MCF 10A (cell line): ENCODE measurements at regions of chr20 and their contacts with region 1.

Region 1: GRCh38 chr20:44217342-44218092 is 6.9 kb upstream of the OSER1 start:
- DNase-seq: peak; percentile 81
- H3K4me3 Mint-ChIP-seq: no peak overlapping the region
- H3K27ac Mint-ChIP-seq: no peak overlapping the region
- H3K4me1 Mint-ChIP-seq: peaks cover 13% of the 10 kb centered on the region
- H3K27me3 Mint-ChIP-seq: no peaks in the 10 kb centered on the region
- CTCF ChIP-seq: peak; percentile 98

Region 2: DNA sequence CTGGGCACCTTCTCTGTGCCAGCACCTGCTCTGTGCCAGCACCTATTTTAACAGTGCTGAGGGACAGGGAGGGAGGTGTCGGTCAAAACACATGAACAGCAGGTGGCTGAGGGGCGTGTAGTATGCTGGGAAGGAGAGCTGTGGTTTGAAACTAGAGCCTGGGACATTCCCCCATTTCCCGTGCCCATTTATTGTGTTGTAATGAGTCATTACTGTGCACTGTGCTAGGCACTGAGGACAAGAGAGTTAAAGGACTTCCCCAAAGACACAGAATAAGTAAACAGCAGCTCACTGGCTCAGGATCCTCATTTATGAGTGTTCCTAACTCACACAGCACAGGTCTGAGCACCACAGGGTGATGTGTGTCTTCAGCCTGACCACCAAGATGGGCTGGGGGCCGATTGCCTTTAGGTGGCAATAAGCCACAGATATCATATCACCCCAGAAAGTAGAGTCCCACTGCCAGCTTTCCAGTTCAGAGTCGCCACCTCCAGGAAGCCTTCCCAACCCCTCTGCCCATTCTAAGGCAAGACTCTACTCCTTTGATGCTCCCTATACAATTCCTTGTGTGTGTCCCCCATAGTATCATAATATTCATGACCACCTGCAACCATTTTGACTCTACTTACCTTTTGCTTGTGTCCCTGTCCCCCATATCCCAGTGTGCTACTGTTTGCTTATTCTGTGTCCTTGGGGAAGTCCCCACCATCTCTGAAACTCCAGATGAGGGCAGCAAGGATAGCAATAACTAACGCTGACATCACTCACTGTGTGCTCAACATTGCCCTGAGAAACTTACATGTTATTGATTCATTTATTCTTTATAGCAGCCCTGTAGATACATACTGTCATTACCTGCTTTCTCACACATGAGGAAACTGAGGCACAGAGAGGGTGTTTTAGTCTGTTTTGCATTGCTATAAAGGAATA is 215.6 kb before region 1 on chr20:
- CTCF ChIA-PET with region 1: no interaction called
- POLR2A ChIA-PET with region 1: no interaction called
- intact Hi-C with region 1: no loop called
- DNase-seq: peak; percentile 21
- H3K4me3 Mint-ChIP-seq: no peak overlapping the region
- H3K27ac Mint-ChIP-seq: no peak overlapping the region
- H3K4me1 Mint-ChIP-seq: no peaks in the 10 kb centered on the region
- H3K27me3 Mint-ChIP-seq: no peaks in the 10 kb centered on the region
- CTCF ChIP-seq: no peak

Region 3: GRCh38 chr20:44187051-44187762 is 30.3 kb before region 1 on chr20 and contains the start of gene JPH2:
- CTCF ChIA-PET with region 1: interaction called, 32 read pairs
- POLR2A ChIA-PET with region 1: interaction called, 22 read pairs
- intact Hi-C with region 1: no loop called
- DNase-seq: peak; percentile 92
- H3K4me3 Mint-ChIP-seq: peak within 1 kb of the TSS; percentile 67
- H3K27ac Mint-ChIP-seq: peak within 1 kb of the TSS; percentile 79
- H3K4me1 Mint-ChIP-seq: peaks cover 63% of the 10 kb centered on the region
- H3K27me3 Mint-ChIP-seq: no peaks in the 10 kb centered on the region
- CTCF ChIP-seq: no peak
- total RNA-seq, gene JPH2: 11.1 and 14.7 TPM in 2 replicates

Region 4: GRCh38 chr20:44234566-44235317 is 17.2 kb after region 1 on chr20:
- CTCF ChIA-PET with region 1: interaction called, 25 read pairs
- POLR2A ChIA-PET with region 1: interaction called, 3 read pairs
- intact Hi-C with region 1: no loop called
- DNase-seq: no peak
- H3K4me3 Mint-ChIP-seq: no peak overlapping the region
- H3K27ac Mint-ChIP-seq: no peak overlapping the region
- H3K4me1 Mint-ChIP-seq: no peaks in the 10 kb centered on the region
- H3K27me3 Mint-ChIP-seq: peaks cover 8% of the 10 kb centered on the region
- CTCF ChIP-seq: no peak

Region 5: GRCh38 chr20:44310664-44311639 is 93.4 kb after region 1 on chr20 and contains the start of gene FITM2:
- CTCF ChIA-PET with region 1: interaction called, 536 read pairs
- POLR2A ChIA-PET with region 1: interaction called, 63 read pairs
- intact Hi-C with region 1: loop called (anchors 1 kb)
- DNase-seq: peak; percentile 97
- H3K4me3 Mint-ChIP-seq: peak within 1 kb of the TSS; percentile 96
- H3K27ac Mint-ChIP-seq: peak within 1 kb of the TSS; percentile 86
- H3K4me1 Mint-ChIP-seq: peaks cover 11% of the 10 kb centered on the region
- H3K27me3 Mint-ChIP-seq: no peaks in the 10 kb centered on the region
- CTCF ChIP-seq: peak; percentile 90
- total RNA-seq, gene FITM2: 7.2 and 8.1 TPM in 2 replicates

Region 6: DNA sequence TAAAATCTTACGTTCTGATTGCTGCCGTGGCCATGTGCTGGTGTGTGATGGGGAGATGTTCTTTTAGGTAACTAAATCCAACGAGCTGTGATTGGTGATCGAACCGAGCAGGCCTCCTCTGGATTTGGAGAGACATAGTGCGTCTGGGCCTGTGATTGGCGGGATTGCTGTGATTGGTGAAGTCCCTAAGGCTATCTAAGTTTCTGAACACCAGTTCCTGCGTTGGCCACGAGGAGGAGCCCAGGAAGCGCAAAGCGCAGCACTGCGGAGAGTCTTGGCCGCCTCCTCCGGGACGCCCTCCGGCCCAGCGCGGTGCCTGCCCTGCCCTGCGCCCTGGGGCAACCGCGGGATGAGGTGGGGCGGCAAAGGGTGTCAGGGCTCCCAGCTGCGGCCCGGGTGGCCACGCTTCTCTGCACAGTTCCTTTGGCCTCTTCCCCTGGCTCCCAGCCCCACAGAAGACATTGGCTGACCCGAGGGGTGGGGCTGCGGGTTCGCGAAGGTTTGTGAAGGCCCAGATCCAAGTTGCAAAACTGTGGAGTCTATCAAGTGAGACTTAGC is 171.0 kb after region 1 on chr20:
- CTCF ChIA-PET with region 1: interaction called, 326 read pairs
- POLR2A ChIA-PET with region 1: interaction called, 36 read pairs
- intact Hi-C with region 1: loop called (anchors 1 kb)
- DNase-seq: peak; percentile 81
- H3K4me3 Mint-ChIP-seq: peak overlapping the region; percentile 24
- H3K27ac Mint-ChIP-seq: peak overlapping the region; percentile 13
- H3K4me1 Mint-ChIP-seq: peaks cover 24% of the 10 kb centered on the region
- H3K27me3 Mint-ChIP-seq: no peaks in the 10 kb centered on the region
- CTCF ChIP-seq: peak; percentile 91

Region 7: GRCh38 chr20:44460795-44461141 is 243.3 kb after region 1 on chr20:
- CTCF ChIA-PET with region 1: interaction called, 347 read pairs
- POLR2A ChIA-PET with region 1: interaction called, 10 read pairs
- intact Hi-C with region 1: loop called (anchors 1 kb)
- DNase-seq: peak; percentile 64
- H3K4me3 Mint-ChIP-seq: no peak overlapping the region
- H3K27ac Mint-ChIP-seq: no peak overlapping the region
- H3K4me1 Mint-ChIP-seq: peaks cover 13% of the 10 kb centered on the region
- H3K27me3 Mint-ChIP-seq: no peaks in the 10 kb centered on the region
- CTCF ChIP-seq: peak; percentile 66

Region 8: GRCh38 chr20:44733341-44734069 is 516.0 kb after region 1 on chr20:
- CTCF ChIA-PET with region 1: interaction called, 4 read pairs
- POLR2A ChIA-PET with region 1: interaction called, 3 read pairs
- intact Hi-C with region 1: loop called (anchors 5 kb)
- DNase-seq: peak; percentile 78
- H3K4me3 Mint-ChIP-seq: peak overlapping the region; percentile 24
- H3K27ac Mint-ChIP-seq: peak overlapping the region; percentile 74
- H3K4me1 Mint-ChIP-seq: peaks cover 54% of the 10 kb centered on the region
- H3K27me3 Mint-ChIP-seq: no peaks in the 10 kb centered on the region
- CTCF ChIP-seq: peak; percentile 90